ENCODE measurements at regions of chr12 and their contacts with region 1.

Region 1: DNA sequence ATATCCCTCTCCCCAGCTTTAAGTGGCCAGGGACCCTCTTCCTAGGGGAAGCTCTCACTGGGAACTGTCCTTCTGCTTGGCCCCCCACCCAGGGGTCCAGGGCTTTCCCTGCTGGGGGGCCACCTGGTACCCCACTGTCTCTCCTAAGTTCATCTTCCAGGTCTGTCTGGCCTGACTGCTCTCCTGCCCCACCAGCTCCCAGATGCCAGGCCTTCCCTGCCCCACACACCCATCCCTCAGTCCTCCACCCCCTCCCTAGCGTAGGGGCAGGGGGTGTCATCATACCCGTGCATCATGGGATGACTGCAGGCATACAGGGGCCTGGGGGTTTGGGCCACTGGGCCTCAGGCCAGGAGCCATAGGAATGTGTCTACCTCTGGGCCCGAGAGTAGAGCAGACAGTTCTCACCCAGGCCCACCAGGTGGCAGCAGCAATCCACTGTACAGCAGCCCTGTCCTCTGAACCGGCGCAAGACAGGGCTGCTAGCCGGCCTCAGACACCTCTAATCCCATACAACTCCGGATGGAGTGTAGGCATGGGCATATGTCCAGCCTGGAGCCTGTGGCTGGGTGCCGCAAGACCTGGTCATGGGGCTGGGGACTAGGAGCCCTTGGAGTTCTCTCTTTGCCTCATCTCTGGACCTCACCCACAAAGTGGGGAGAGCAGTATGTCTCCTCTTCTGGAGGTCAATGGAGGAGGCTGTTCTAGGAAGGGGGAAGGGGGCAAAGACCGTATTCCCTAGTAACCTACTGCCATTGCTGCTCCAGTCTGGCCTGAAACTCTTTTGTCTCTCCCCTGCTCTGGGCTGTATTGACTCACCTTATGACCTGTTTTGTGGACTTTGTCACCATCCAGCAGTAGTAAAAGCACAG is 10.0 kb upstream of the SMARCD1 start:
- DNase-seq: peak; percentile 37
- ATAC-seq: peak; percentile 96
- H3K4me3 ChIP-seq: no peak overlapping the region
- H3K27ac ChIP-seq: no peak overlapping the region
- H3K4me1 ChIP-seq: no peaks in the 10 kb centered on the region; the same call in 1 of the 2 replicates
- H3K27me3 ChIP-seq: no peaks in the 10 kb centered on the region; a peak in 1 of 4 replicates
- CTCF ChIP-seq: peak; percentile 91 to 98 (median 95); a peak in 5 of 6 replicates
- EP300 ChIP-seq: no peak
- POLR2A ChIP-seq: no peak
- RAD21 ChIP-seq: peak; percentile 87

Region 2: GRCh38 chr12:49866859-49867579 is 208.2 kb before region 1 on chr12:
- CTCF ChIA-PET with region 1: interaction called, 4 read pairs
- POLR2A ChIA-PET with region 1: no interaction called
- RAD21 ChIA-PET with region 1: interaction called, 4 read pairs
- SMC1A ChIA-PET with region 1: interaction called, 5 read pairs
- in situ Hi-C with region 1: no loop called
- intact Hi-C with region 1: loop called (anchors 5 kb)
- DNase-seq: no peak
- ATAC-seq: peak; percentile 96
- H3K4me3 ChIP-seq: no peak overlapping the region
- H3K27ac ChIP-seq: no peak overlapping the region
- H3K4me1 ChIP-seq: no peaks in the 10 kb centered on the region
- H3K27me3 ChIP-seq: no peaks in the 10 kb centered on the region; a peak in 2 of 4 replicates
- CTCF ChIP-seq: peak; percentile 94 to 99 (median 99); a peak in 5 of 6 replicates
- EP300 ChIP-seq: no peak
- POLR2A ChIP-seq: no peak
- RAD21 ChIP-seq: peak; percentile 74

Region 3: GRCh38 chr12:50038336-50038735 is 36.8 kb before region 1 on chr12:
- CTCF ChIA-PET with region 1: interaction called, 100 read pairs
- POLR2A ChIA-PET with region 1: no interaction called
- RAD21 ChIA-PET with region 1: interaction called, 11 read pairs
- SMC1A ChIA-PET with region 1: interaction called, 37 read pairs
- in situ Hi-C with region 1: no loop called
- intact Hi-C with region 1: loop called (anchors 1 kb)
- DNase-seq: no peak
- ATAC-seq: no peak
- H3K4me3 ChIP-seq: no peak overlapping the region
- H3K27ac ChIP-seq: no peak overlapping the region
- H3K4me1 ChIP-seq: no peaks in the 10 kb centered on the region
- H3K27me3 ChIP-seq: no peaks in the 10 kb centered on the region
- CTCF ChIP-seq: no peak
- EP300 ChIP-seq: no peak
- POLR2A ChIP-seq: no peak
- RAD21 ChIP-seq: no peak

Region 4: GRCh38 chr12:50055831-50056638 is 19.1 kb before region 1 on chr12:
- CTCF ChIA-PET with region 1: interaction called, 22 read pairs
- POLR2A ChIA-PET with region 1: no interaction called
- RAD21 ChIA-PET with region 1: no interaction called
- SMC1A ChIA-PET with region 1: no interaction called
- in situ Hi-C with region 1: no loop called
- intact Hi-C with region 1: no loop called
- DNase-seq: no peak
- ATAC-seq: peak; percentile 84
- H3K4me3 ChIP-seq: no peak overlapping the region
- H3K27ac ChIP-seq: no peak overlapping the region
- H3K4me1 ChIP-seq: 0 out of 2 replicates have a peak, but pooled peaks cover 4% of the 10 kb centered on the region
- H3K27me3 ChIP-seq: peaks cover 12 to 21% of the 10 kb centered on the region in 2 experiments; a peak in 3 of 4 replicates
- CTCF ChIP-seq: peak; percentile 81 to 98 (median 96)
- EP300 ChIP-seq: no peak
- POLR2A ChIP-seq: no peak
- RAD21 ChIP-seq: peak; percentile 79

Region 5: GRCh38 chr12:50174971-50175715 is 100.0 kb after region 1 on chr12:
- CTCF ChIA-PET with region 1: interaction called, 50 read pairs
- POLR2A ChIA-PET with region 1: interaction called, 8 read pairs
- RAD21 ChIA-PET with region 1: interaction called, 10 read pairs
- SMC1A ChIA-PET with region 1: interaction called, 9 read pairs
- in situ Hi-C with region 1: no loop called
- intact Hi-C with region 1: loop called (anchors 1 kb)
- DNase-seq: no peak
- ATAC-seq: peak; percentile 34; the same call in 1 of the 3 replicates
- H3K4me3 ChIP-seq: no peak overlapping the region
- H3K27ac ChIP-seq: no peak overlapping the region
- H3K4me1 ChIP-seq: no peaks in the 10 kb centered on the region
- H3K27me3 ChIP-seq: no peaks in the 10 kb centered on the region
- CTCF ChIP-seq: peak; percentile 47 to 64 (median 53); a peak in 5 of 6 replicates
- EP300 ChIP-seq: no peak
- POLR2A ChIP-seq: no peak
- RAD21 ChIP-seq: peak; percentile 73

Region 6: DNA sequence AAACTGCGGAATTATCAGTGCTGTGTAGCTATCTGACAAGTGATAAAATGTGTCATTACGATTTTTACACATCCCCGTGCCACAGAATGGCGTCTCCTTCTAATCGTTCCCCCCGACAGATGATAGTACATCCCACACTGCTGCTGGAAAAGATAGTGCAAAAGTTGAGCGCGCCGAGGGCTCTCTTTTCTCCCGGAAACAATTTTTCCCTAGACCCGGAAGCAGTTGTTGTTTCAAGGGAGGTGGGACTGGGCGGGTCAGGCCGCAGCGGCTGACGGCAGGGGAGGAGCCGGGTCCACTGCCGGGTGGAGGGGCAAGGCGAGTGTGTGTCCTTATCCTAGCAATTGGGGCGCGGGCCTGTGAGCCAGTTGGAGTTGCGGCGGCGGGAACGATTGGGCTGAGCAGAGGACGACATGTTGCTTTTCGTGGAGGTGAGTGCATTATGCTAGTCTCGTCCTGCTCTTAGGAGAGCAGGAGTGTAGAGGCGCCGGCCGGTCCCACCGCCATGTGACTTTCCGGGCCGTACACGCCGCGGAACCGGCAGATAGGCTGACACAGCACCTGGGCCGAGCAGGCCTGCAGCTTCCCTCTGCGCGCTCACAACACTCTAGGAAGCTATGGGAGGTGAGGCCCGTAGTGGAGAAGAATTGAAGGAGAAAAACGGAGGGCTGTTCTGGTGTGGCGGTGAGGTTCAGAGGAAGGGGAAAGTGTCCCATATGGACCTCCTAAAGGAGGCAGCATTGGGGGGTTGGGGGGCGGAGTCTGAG is 325.6 kb after region 1 on chr12 and contains the start of gene LARP4:
- CTCF ChIA-PET with region 1: no interaction called
- POLR2A ChIA-PET with region 1: no interaction called
- RAD21 ChIA-PET with region 1: no interaction called
- SMC1A ChIA-PET with region 1: no interaction called
- in situ Hi-C with region 1: no loop called
- intact Hi-C with region 1: loop called (anchors 10 kb)
- DNase-seq: peak; percentile 85
- ATAC-seq: peak; percentile 96
- H3K4me3 ChIP-seq: peak within 1 kb of the TSS; percentile 76
- H3K27ac ChIP-seq: peak within 1 kb of the TSS; percentile 82
- H3K4me1 ChIP-seq: no peaks in the 10 kb centered on the region
- H3K27me3 ChIP-seq: no peaks in the 10 kb centered on the region
- CTCF ChIP-seq: no peak
- EP300 ChIP-seq: no peak
- POLR2A ChIP-seq: peak; percentile 95
- RAD21 ChIP-seq: no peak
- polyA plus RNA-seq, gene LARP4: 24.1 to 26.6 TPM

Region 7: DNA sequence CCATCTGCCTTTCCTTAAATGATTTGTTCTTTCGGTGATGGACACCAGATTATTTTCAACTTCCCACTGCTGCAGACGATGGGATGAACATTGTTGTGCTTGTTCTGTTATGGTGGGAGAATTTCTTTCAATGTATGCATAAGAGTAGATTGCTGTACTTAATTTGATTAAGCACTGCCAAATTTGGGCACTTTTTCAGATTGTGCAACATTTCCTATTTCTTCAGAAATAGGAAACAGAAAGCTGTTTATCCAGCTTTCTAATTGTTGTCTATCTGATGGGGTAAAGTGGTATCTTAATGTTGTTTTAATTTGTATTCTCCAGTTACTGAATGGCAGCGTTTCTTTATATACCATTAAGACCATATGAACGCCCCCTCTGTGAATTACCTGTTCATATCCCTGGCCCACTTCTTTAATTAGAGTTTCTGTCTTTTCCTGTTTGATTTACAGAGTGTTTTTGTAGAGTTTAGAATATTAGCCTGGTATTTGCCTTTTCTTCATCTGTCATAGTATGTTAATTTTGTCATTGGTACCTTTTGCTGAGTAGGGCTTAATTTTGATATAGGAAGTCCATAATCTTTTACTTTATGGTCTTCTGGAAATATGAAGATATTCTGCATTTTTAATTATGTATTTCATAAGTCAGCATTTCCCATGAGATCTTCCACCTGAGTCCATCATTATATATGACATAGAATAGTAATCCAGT is 489.2 kb after region 1 on chr12:
- CTCF ChIA-PET with region 1: no interaction called
- POLR2A ChIA-PET with region 1: no interaction called
- RAD21 ChIA-PET with region 1: no interaction called
- SMC1A ChIA-PET with region 1: no interaction called
- in situ Hi-C with region 1: no loop called
- intact Hi-C with region 1: no loop called
- DNase-seq: no peak
- ATAC-seq: no peak
- H3K4me3 ChIP-seq: no peak overlapping the region
- H3K27ac ChIP-seq: no peak overlapping the region
- H3K4me1 ChIP-seq: peaks cover 12% of the 10 kb centered on the region; the same call in 1 of the 2 replicates
- H3K27me3 ChIP-seq: no peaks in the 10 kb centered on the region
- CTCF ChIP-seq: no peak
- EP300 ChIP-seq: no peak
- POLR2A ChIP-seq: no peak
- RAD21 ChIP-seq: no peak

Measured in GM12878 (cell line).